ENCODE measurements at regions of chr16 and their contacts with region 1.

Region 1: DNA sequence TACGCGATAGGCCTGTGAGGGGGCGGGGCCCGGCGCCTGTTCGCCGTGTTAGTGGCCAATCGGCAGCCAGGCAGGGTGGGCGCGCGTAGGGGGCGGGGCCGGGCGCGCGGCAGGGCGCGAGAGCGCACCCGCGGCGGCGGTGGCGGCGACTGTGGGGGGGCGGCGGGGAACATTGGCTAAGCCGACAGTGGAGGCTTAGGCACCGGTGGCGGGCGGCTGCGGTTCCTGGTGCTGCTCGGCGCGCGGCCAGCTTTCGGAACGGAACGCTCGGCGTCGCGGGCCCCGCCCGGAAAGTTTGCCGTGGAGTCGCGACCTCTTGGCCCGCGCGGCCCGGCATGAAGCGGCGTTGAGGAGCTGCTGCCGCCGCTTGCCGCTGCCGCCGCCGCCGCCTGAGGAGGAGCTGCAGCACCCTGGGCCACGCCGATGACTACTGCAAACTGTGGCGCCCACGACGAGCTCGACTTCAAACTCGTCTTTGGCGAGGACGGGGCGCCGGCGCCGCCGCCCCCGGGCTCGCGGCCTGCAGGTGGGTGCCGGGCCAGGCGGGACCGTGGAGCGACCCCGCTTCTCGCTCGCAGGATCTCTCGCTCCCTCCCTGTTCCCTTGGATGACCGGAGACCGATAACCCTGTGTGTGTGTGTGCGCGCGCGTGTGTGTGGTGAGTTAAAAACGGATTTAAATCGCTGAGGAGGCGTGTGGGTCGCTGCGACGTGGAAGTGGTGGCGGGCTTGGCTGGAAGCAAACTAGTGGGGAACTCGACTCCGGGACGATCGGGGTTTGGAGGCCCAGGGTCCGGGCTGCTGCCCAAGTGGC is at the start of gene NFATC3:
- DNase-seq: peak; percentile 97 to 100 (median 99)
- ATAC-seq: peak; percentile 75
- H3K4me3 ChIP-seq: peak within 1 kb of the TSS; percentile 93
- H3K4me3 Mint-ChIP-seq: peak within 1 kb of the TSS; percentile 94
- H3K27ac ChIP-seq: peak within 1 kb of the TSS; percentile 91 to 92
- H3K27ac Mint-ChIP-seq: peak within 1 kb of the TSS; percentile 89
- H3K4me1 ChIP-seq: peaks cover 50% of the 10 kb centered on the region
- H3K4me1 Mint-ChIP-seq: peaks cover 75% of the 10 kb centered on the region
- H3K27me3 ChIP-seq: no peaks in the 10 kb centered on the region
- H3K27me3 Mint-ChIP-seq: no peaks in the 10 kb centered on the region
- CTCF ChIP-seq: no peak
- total RNA-seq, gene NFATC3: 84.8 to 94.4 TPM

Region 2: DNA sequence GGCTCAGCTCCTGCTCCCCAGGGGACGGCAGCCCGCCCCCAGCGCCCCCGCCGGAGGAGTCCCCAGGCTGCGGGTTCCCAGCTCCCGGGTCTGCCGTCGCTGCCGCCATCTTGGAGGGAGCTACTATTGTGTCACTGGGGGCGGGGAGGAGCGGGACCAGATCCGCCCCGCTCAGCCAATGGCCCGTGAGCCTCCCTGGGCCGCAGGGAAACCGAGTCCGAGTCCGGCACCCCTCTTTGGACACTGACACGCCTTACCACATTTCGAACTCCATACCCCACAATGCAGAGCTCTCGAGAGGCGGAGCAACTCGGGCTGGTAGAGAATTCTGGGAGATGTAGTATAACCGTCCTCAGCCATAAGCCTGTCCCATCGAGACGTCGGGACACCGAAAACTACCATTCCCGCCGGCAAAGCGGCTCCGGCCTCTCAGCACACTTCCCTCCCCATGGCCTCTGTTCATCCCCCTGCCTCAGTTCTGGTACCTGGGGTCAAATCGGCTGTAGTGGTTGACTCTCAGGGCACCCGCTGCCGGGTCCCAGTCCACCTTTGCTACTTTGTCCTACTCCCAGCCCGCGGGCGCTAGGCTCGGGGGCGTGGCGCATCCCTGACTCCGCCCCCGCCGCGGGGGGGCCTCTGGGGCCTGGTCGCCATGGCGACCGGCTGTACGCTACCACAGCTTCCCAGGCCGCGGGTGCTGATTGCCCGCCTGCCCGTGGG is 278.9 kb before region 1 on chr16 and contains the starts of genes RANBP10 and TSNAXIP1:
- CTCF ChIA-PET with region 1: no interaction called
- POLR2A ChIA-PET with region 1: interaction called, 11 read pairs
- intact Hi-C with region 1: no loop called
- DNase-seq: peak; percentile 90 to 99 (median 93)
- ATAC-seq: peak; percentile 92
- H3K4me3 ChIP-seq: peak within 1 kb of the TSS; percentile 97
- H3K4me3 Mint-ChIP-seq: peak within 1 kb of the TSS; percentile 91
- H3K27ac ChIP-seq: peak within 1 kb of the TSS; percentile 69 to 75
- H3K27ac Mint-ChIP-seq: peak within 1 kb of the TSS; percentile 76
- H3K4me1 ChIP-seq: peaks cover 50% of the 10 kb centered on the region
- H3K4me1 Mint-ChIP-seq: peaks cover 43% of the 10 kb centered on the region
- H3K27me3 ChIP-seq: no peaks in the 10 kb centered on the region
- H3K27me3 Mint-ChIP-seq: no peaks in the 10 kb centered on the region
- CTCF ChIP-seq: no peak
- total RNA-seq, gene RANBP10: 12.0 to 13.6 TPM
- total RNA-seq, gene TSNAXIP1: 0.52 to 0.61 TPM

Region 3: GRCh38 chr16:67999985-68000384 is 85.5 kb before region 1 on chr16:
- CTCF ChIA-PET with region 1: no interaction called
- POLR2A ChIA-PET with region 1: interaction called, 41 read pairs
- intact Hi-C with region 1: no loop called
- DNase-seq: peak in 3 of 14 experiments; percentile 6 to 34 (median 22)
- ATAC-seq: peak; percentile 11
- H3K4me3 ChIP-seq: peak overlapping the region; percentile 61
- H3K4me3 Mint-ChIP-seq: peak overlapping the region; percentile 86
- H3K27ac ChIP-seq: peak overlapping the region; percentile 48 to 83
- H3K27ac Mint-ChIP-seq: peak overlapping the region; percentile 93
- H3K4me1 ChIP-seq: peaks cover 70% of the 10 kb centered on the region
- H3K4me1 Mint-ChIP-seq: peaks cover 55% of the 10 kb centered on the region
- H3K27me3 ChIP-seq: no peaks in the 10 kb centered on the region
- H3K27me3 Mint-ChIP-seq: no peaks in the 10 kb centered on the region
- CTCF ChIP-seq: no peak

Region 4: DNA sequence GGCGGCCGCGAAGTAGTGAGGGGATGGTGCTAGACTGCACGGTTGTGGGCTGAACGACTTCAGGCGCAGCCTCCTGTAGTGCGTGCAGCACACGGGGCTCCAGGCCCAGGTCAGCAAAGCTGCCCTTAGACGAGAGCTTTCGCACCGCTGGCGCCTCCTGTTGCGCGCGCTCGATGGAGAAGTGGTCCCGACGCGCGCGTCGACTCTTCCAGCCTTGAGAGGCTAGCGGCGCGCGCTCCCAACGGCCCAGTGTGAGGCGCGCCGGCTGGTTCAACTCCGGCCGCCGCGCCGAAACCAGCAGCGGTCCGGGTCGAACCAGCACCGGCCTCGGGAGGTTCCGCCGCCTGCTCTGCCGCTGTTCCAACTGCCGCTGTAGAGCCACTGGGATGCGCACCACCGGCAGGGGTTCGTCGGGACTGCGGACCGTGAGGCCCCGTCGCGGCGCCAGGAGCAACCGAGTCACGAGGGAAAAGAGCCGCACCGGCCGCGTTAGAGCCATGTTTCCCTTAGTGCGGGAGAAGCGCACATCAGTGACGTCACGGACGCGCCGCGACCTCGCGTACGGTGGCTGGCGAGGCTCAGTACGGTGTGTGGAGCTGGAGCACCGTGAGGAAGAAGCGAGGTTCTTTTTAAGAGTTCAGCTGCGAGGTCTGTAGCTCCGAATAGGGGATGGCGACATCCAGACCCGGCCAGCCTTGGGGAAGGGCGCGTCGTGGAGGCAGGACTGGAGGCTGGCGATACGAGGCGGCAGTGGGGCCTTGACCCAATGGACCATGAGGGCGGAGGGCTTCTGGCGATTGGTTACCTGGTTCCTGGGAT is 62.6 kb before region 1 on chr16 and contains the starts of genes DDX28 and DUS2:
- CTCF ChIA-PET with region 1: no interaction called
- POLR2A ChIA-PET with region 1: interaction called, 11 read pairs
- intact Hi-C with region 1: no loop called
- DNase-seq: peak; percentile 88 to 98 (median 94)
- ATAC-seq: peak; percentile 95
- H3K4me3 ChIP-seq: peak within 1 kb of the TSS; percentile 85
- H3K4me3 Mint-ChIP-seq: peak within 1 kb of the TSS; percentile 93
- H3K27ac ChIP-seq: peak within 1 kb of the TSS; percentile 78 to 83
- H3K27ac Mint-ChIP-seq: peak within 1 kb of the TSS; percentile 90
- H3K4me1 ChIP-seq: peaks cover 30% of the 10 kb centered on the region
- H3K4me1 Mint-ChIP-seq: peaks cover 28% of the 10 kb centered on the region
- H3K27me3 ChIP-seq: no peaks in the 10 kb centered on the region
- H3K27me3 Mint-ChIP-seq: no peaks in the 10 kb centered on the region
- CTCF ChIP-seq: no peak
- total RNA-seq, gene DDX28: 18.9 to 19.4 TPM
- total RNA-seq, gene DUS2: 10.4 to 13.6 TPM

Region 5: GRCh38 chr16:68074850-68075555 is 10.5 kb before region 1 on chr16:
- CTCF ChIA-PET with region 1: interaction called, 11 read pairs
- POLR2A ChIA-PET with region 1: interaction called, 174 read pairs
- intact Hi-C with region 1: no loop called
- DNase-seq: peak in 11 of 14 experiments; percentile 24 to 92 (median 48)
- ATAC-seq: peak; percentile 51
- H3K4me3 ChIP-seq: no peak overlapping the region
- H3K4me3 Mint-ChIP-seq: peak overlapping the region; percentile 75
- H3K27ac ChIP-seq: peak overlapping the region in 1 of 2 donors; percentile 14
- H3K27ac Mint-ChIP-seq: peak overlapping the region; percentile 82
- H3K4me1 ChIP-seq: peaks cover 95% of the 10 kb centered on the region
- H3K4me1 Mint-ChIP-seq: peaks cover 87% of the 10 kb centered on the region
- H3K27me3 ChIP-seq: no peaks in the 10 kb centered on the region
- H3K27me3 Mint-ChIP-seq: no peaks in the 10 kb centered on the region
- CTCF ChIP-seq: no peak

Region 6: DNA sequence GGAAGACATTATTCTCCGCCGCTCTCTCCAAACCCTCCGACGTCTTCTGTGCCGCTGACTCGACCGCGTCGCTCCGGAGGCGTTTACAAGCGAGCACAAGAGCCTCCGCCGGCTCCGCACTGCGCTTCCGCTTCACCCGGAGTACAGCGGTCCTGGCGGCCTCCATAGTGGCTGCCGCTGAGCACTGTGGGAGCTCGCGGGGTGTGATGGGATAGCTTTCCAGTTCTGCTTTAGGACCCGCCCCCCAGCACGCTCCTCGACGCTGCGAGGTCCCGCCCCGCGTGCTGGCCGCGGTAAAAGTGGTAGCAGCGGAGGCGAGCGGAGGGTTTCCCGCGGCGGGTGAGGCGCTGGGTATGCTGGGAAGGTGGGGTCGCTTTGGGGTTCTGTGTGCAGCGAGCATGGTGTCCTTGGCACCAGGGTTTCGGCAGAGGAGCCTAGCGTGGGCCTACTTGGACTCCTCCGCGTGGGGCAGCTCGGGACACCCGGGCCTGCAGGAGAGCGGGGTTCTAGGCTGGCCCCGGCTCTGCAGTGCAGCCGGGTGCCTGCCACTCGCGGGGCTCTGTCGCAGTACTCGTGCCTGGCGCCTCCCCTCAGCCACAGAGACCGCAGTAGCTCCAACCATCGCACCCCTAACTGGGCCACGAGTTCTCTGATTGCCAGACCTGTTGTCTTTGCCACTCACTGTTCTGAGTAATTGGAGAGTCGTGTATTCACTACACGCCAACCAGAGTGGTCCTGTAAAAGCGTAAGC is 225.5 kb after region 1 on chr16 and contains the starts of genes PRMT7 and SLC7A6OS:
- CTCF ChIA-PET with region 1: interaction called, 4 read pairs
- POLR2A ChIA-PET with region 1: interaction called, 5 read pairs
- intact Hi-C with region 1: loop called in 1 of 2 experiments (anchors 2 kb)
- DNase-seq: peak; percentile 82 to 97 (median 90)
- ATAC-seq: peak; percentile 98
- H3K4me3 ChIP-seq: peak within 1 kb of the TSS; percentile 100
- H3K4me3 Mint-ChIP-seq: peak within 1 kb of the TSS; percentile 100
- H3K27ac ChIP-seq: peak within 1 kb of the TSS; percentile 73 to 79
- H3K27ac Mint-ChIP-seq: peak within 1 kb of the TSS; percentile 91
- H3K4me1 ChIP-seq: peaks cover 49% of the 10 kb centered on the region
- H3K4me1 Mint-ChIP-seq: peaks cover 62% of the 10 kb centered on the region
- H3K27me3 ChIP-seq: no peaks in the 10 kb centered on the region
- H3K27me3 Mint-ChIP-seq: no peaks in the 10 kb centered on the region
- CTCF ChIP-seq: peak; percentile 14
- total RNA-seq, gene PRMT7: 46.3 to 51.0 TPM
- total RNA-seq, gene SLC7A6OS: 29.0 to 32.1 TPM

Measured in CD4-positive, alpha-beta T cell (primary cell).